ENCODE measurements at regions of chr11 and their contacts with region 1.

Region 1: GRCh38 chr11:12331239-12331874 is 46.0 kb upstream of the PARVA start:
- DNase-seq: peak; percentile 93
- H3K4me3 ChIP-seq: no peak overlapping the region
- H3K27ac ChIP-seq: no peak overlapping the region
- H3K4me1 ChIP-seq: peaks cover 18% of the 10 kb centered on the region
- H3K27me3 ChIP-seq: no peaks in the 10 kb centered on the region
- CTCF ChIP-seq: peak; percentile 74

Region 2: GRCh38 chr11:12288212-12288930 is 43.0 kb before region 1 on chr11:
- CTCF ChIA-PET with region 1: interaction called, 16 read pairs
- POLR2A ChIA-PET with region 1: no interaction called
- intact Hi-C with region 1: loop called (anchors 5 kb)
- DNase-seq: peak; percentile 89
- H3K4me3 ChIP-seq: no peak overlapping the region
- H3K27ac ChIP-seq: no peak overlapping the region
- H3K4me1 ChIP-seq: no peaks in the 10 kb centered on the region
- H3K27me3 ChIP-seq: no peaks in the 10 kb centered on the region
- CTCF ChIP-seq: peak; percentile 88

Region 3: GRCh38 chr11:12888525-12889158 is 557.3 kb after region 1 on chr11:
- CTCF ChIA-PET with region 1: interaction called, 19 read pairs
- POLR2A ChIA-PET with region 1: no interaction called
- intact Hi-C with region 1: no loop called
- DNase-seq: peak; percentile 83
- H3K4me3 ChIP-seq: no peak overlapping the region
- H3K27ac ChIP-seq: no peak overlapping the region
- H3K4me1 ChIP-seq: peaks cover 12% of the 10 kb centered on the region
- H3K27me3 ChIP-seq: no peaks in the 10 kb centered on the region
- CTCF ChIP-seq: peak; percentile 84

Region 4: GRCh38 chr11:12963792-12964536 is 632.6 kb after region 1 on chr11:
- CTCF ChIA-PET with region 1: interaction called, 11 read pairs
- POLR2A ChIA-PET with region 1: no interaction called
- intact Hi-C with region 1: loop called (anchors 5 kb)
- DNase-seq: peak; percentile 78
- H3K4me3 ChIP-seq: no peak overlapping the region
- H3K27ac ChIP-seq: no peak overlapping the region
- H3K4me1 ChIP-seq: no peaks in the 10 kb centered on the region
- H3K27me3 ChIP-seq: no peaks in the 10 kb centered on the region
- CTCF ChIP-seq: peak; percentile 85

Region 5: GRCh38 chr11:13335319-13335718 is 1004.0 kb after region 1 on chr11:
- CTCF ChIA-PET with region 1: no interaction called
- POLR2A ChIA-PET with region 1: no interaction called
- intact Hi-C with region 1: loop called (anchors 10 kb)
- DNase-seq: peak; percentile 75
- H3K4me3 ChIP-seq: no peak overlapping the region
- H3K27ac ChIP-seq: no peak overlapping the region
- H3K4me1 ChIP-seq: peaks cover 4% of the 10 kb centered on the region
- H3K27me3 ChIP-seq: no peaks in the 10 kb centered on the region
- CTCF ChIP-seq: peak; percentile 85